ENCODE measurements at regions of chr18 and their contacts with region 1.

Region 1: GRCh38 chr18:40687399-40687798 is 1267.6 kb upstream of the PIK3C3 start:
- DNase-seq: no peak
- ATAC-seq: no peak
- H3K4me3 Mint-ChIP-seq: no peak overlapping the region
- H3K27ac Mint-ChIP-seq: no peak overlapping the region
- H3K4me1 Mint-ChIP-seq: no peaks in the 10 kb centered on the region
- H3K27me3 Mint-ChIP-seq: no peaks in the 10 kb centered on the region
- CTCF ChIP-seq: no peak

Region 2: GRCh38 chr18:40670668-40671375 is 16.6 kb before region 1 on chr18:
- CTCF ChIA-PET with region 1: no interaction called
- POLR2A ChIA-PET with region 1: no interaction called
- intact Hi-C with region 1: loop called (anchors 2 kb)
- DNase-seq: no peak
- ATAC-seq: no peak
- H3K4me3 Mint-ChIP-seq: no peak overlapping the region
- H3K27ac Mint-ChIP-seq: no peak overlapping the region
- H3K4me1 Mint-ChIP-seq: no peaks in the 10 kb centered on the region
- H3K27me3 Mint-ChIP-seq: no peaks in the 10 kb centered on the region
- CTCF ChIP-seq: no peak

Region 3: DNA sequence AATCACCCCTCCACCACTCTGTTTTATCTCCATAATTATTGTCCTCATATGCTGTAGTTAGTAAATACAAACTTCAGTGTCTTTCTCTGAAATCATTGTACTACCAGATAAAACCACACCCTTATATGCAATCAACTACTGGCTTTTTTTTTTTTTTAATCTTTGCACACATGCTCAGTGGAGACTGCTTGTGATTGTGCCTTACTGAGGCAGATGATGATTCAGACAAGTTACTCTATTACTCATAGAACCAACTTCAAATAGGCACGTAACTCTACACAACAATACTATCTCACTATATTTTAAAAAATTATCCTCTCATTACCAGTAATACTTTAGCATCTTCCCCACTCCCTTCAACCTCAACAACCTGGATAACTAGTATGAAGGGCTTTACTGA is 10.7 kb before region 1 on chr18:
- CTCF ChIA-PET with region 1: no interaction called
- POLR2A ChIA-PET with region 1: no interaction called
- intact Hi-C with region 1: loop called (anchors 1 kb)
- DNase-seq: no peak
- ATAC-seq: no peak
- H3K4me3 Mint-ChIP-seq: no peak overlapping the region
- H3K27ac Mint-ChIP-seq: no peak overlapping the region
- H3K4me1 Mint-ChIP-seq: no peaks in the 10 kb centered on the region
- H3K27me3 Mint-ChIP-seq: no peaks in the 10 kb centered on the region
- CTCF ChIP-seq: no peak

Measured in activated B cell treated with CpG ODN at 0.5 μM for 24 hours (primary cell).